ENCODE measurements at regions of chr9 and their contacts with region 1.

Region 1: DNA sequence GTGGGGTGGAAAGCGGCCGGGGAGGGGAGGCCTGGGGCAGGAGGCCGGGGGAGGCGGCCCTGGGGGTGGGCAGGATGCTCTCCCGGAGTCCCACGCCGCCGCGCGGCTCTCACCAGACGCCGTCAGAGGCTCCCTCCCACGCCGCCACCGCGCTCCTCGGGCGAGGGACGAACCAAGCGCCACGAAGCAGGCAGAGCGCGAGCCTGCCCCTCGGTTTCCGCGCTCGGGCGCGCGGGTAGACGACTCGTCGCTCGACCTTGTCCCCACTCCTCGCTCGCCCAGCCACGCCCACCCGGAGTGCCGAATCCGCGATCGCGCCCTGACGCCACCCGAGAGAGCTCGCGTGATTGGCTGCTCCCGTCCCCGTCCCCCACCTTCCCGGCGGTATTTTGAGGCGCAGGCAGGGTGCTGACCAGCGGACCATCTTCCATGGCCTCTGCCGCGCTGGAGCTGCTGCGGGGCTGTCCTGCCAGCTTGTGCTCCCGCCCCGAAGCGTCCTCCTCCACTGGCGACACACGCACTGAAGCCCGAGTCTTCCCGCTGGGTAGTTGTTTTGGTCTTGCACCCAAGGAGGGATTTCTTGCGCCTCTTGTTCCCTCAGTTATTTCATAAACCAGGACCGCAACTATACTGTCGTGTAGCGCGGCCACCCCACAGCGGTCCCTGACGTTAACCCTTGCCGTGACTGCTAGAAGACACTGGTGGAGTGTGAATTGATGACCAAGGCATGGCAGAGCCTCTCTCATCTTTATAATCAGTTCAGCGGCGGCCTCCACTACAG is at the start of gene GNE:
- DNase-seq: peak; percentile 97
- H3K4me3 Mint-ChIP-seq: peak within 1 kb of the TSS; percentile 86
- H3K27ac Mint-ChIP-seq: peak within 1 kb of the TSS; percentile 84
- H3K4me1 Mint-ChIP-seq: peaks cover 7% of the 10 kb centered on the region
- H3K27me3 Mint-ChIP-seq: no peaks in the 10 kb centered on the region
- total RNA-seq, gene GNE: 27.7 and 28.5 TPM in 2 replicates

Region 2: GRCh38 chr9:36204906-36205547 is 53.4 kb before region 1 on chr9:
- intact Hi-C with region 1: no loop called
- DNase-seq: no peak
- H3K4me3 Mint-ChIP-seq: no peak overlapping the region
- H3K27ac Mint-ChIP-seq: no peak overlapping the region
- H3K4me1 Mint-ChIP-seq: peaks cover 41% of the 10 kb centered on the region
- H3K27me3 Mint-ChIP-seq: no peaks in the 10 kb centered on the region

Region 3: DNA sequence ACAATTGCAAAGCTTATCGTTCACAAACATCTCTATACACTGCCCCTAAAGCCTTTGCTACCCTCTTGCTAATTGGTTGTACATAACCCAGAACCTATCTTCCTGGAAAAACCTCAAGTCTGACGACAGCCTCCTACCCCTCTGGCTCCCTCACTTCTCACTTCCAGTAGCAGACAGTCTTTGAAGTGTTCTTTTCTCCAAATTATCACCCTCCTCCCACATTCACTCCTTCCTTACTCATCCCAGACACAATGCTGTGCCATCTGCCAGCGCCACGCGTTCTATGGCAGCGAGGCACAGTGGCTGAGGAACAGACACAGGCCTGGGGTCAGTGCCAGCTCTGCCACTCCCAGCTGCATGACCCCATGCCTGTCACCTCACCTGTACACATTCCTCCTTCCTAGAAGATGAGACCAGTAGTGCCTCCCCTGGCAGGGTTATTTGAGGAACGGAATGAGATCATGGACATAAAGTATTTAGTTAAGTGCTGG is 39.9 kb before region 1 on chr9:
- intact Hi-C with region 1: loop called (anchors 5 kb)
- DNase-seq: peak; percentile 20
- H3K4me3 Mint-ChIP-seq: peak overlapping the region; percentile 41
- H3K27ac Mint-ChIP-seq: peak overlapping the region; percentile 87
- H3K4me1 Mint-ChIP-seq: peaks cover 34% of the 10 kb centered on the region
- H3K27me3 Mint-ChIP-seq: no peaks in the 10 kb centered on the region

Measured in activated T-helper 2 cell treated with anti-CD3 and anti-CD28 coated beads, Interferon-gamma antibody, Interleukin-2, Interleukin-4, amounts not matched to agents 10 μg/mL and 5 μg/mL and 100 μg/mL, durations not matched to agents 14 hours and 24 hours and 36 hours (primary cell).